Activated B cell treated with CpG ODN at 0.5 μM for 24 hours (primary cell): ENCODE measurements at regions of chr10 and their contacts with region 1.

Region 1: DNA sequence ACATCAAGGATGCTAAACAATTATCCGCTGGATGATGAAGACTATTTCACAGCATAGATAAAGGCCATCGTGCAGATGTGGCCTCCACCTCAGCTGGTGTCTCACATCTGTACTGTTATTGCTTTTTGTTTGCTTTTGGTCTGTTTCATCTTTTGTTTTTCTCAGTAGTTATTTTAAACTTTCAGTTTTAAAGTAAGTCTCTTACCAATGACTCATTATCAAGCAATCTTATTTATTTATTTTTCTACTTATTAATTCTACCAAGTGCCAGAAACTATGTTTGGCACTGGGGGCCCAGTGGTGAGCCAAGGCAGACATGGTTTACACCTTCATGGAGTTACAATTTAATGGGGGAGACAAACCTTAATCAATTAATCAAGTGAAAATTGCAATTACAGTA is 250.9 kb upstream of the TMEM72 start:
- DNase-seq: no peak
- ATAC-seq: no peak
- H3K4me3 Mint-ChIP-seq: no peak overlapping the region
- H3K27ac Mint-ChIP-seq: no peak overlapping the region
- H3K4me1 Mint-ChIP-seq: no peaks in the 10 kb centered on the region
- H3K27me3 Mint-ChIP-seq: no peaks in the 10 kb centered on the region
- CTCF ChIP-seq: no peak

Region 2: DNA sequence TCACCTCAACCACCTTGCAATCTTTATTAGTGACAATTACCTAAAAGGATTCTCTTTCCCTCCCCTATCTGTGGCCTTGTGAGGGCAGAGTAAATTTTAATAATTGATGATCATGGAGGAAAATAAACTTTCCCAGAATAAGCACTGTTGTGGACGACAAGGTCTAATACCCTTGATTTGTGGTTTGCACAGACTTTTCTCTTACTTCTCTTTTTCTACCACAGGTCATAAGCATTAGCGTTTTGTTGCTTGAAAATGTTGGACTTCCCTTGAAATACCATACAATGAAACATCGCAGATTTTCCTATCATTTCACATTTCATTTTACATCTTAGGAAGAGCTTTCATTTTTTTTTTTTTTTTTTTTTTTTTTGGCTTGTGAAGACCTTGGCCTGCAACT is 62.8 kb after region 1 on chr10:
- CTCF ChIA-PET with region 1: no interaction called
- POLR2A ChIA-PET with region 1: interaction called, 12 read pairs
- intact Hi-C with region 1: no loop called
- DNase-seq: no peak
- ATAC-seq: peak; percentile 42
- H3K4me3 Mint-ChIP-seq: peak overlapping the region; percentile 6
- H3K27ac Mint-ChIP-seq: no peak overlapping the region
- H3K4me1 Mint-ChIP-seq: peaks cover 35% of the 10 kb centered on the region
- H3K27me3 Mint-ChIP-seq: peaks cover 2% of the 10 kb centered on the region
- CTCF ChIP-seq: no peak

Region 3: DNA sequence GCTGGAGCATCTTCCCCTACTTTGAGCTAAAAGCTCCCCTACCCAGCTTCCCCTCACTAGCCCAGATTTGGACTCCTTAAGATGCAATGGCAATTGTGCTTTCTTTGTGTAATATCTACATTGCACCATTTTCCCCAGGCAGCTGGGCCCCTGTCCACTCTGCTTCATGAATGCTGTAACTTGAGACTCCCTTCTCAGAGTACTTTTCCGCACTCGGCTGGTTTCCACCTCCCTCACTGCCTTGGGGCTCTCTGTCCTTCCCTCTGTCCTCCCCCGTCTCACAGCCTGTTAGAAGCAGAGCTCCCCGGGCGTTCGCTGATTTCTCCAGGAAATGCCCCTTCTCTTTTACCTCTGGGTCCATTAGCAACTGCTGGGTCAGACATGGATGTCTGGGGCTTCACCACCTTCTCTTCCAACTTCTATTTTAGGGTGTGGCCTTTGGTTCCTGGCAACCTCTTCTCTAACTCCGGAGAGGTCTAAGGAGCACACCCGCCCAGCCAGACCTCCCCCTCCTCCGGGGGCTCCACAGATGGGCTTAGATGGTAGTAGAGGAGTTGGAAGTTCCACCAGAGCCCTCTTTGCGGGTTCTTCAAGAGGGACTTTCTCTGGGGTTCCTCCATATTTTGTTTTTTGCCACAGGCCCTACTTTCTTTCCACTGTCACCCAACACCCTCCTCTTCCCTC is 247.9 kb after region 1 on chr10:
- CTCF ChIA-PET with region 1: no interaction called
- POLR2A ChIA-PET with region 1: no interaction called
- intact Hi-C with region 1: no loop called
- DNase-seq: no peak
- ATAC-seq: no peak
- H3K4me3 Mint-ChIP-seq: no peak overlapping the region
- H3K27ac Mint-ChIP-seq: no peak overlapping the region
- H3K4me1 Mint-ChIP-seq: peaks cover 2% of the 10 kb centered on the region
- H3K27me3 Mint-ChIP-seq: peaks cover 5% of the 10 kb centered on the region
- CTCF ChIP-seq: no peak